MCF 10A (cell line): ENCODE measurements at regions of chr6 and their contacts with region 1.

Region 1: DNA sequence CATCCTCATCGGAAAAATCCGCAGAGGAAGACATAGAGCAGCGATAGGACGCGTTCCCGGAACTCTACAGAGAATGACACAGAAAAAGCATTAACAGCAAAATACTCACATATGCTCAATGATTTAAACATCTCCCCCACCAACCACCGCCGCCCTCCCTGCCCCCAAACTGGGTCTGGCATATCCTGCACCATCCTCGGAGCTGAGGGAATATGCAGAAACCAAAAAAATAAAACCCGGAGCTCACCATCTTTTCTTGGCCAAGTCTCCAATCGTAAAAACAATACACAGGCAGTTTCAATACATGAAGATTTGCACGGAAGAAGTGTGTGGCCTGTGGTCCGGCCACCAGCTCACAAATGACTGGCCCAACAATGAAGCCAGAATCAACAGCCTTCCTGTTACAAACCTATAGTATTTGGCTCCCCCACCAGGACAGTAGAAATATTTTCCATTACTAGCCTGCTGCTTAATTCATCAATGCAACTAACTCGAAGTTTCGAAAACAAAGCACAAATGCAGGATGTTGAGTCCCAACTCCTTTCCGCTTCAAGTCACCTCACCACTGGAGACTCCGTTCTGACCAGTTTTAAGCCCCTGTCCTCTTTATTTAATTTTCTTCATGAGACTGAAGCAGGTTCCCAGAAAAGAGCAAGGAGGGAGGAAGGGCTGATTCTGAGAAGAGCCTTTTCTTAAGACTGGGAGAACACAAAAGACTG is 103.2 kb upstream of the BEND6 start:
- DNase-seq: peak; percentile 86
- H3K4me3 Mint-ChIP-seq: peak overlapping the region; percentile 81
- H3K27ac Mint-ChIP-seq: peak overlapping the region; percentile 56
- H3K4me1 Mint-ChIP-seq: peaks cover 35% of the 10 kb centered on the region
- H3K27me3 Mint-ChIP-seq: no peaks in the 10 kb centered on the region
- CTCF ChIP-seq: peak; percentile 57

Region 2: GRCh38 chr6:56749632-56750151 is 102.0 kb before region 1 on chr6:
- CTCF ChIA-PET with region 1: interaction called, 12 read pairs
- POLR2A ChIA-PET with region 1: interaction called, 8 read pairs
- intact Hi-C with region 1: no loop called
- DNase-seq: peak; percentile 88
- H3K4me3 Mint-ChIP-seq: peak overlapping the region; percentile 65
- H3K27ac Mint-ChIP-seq: peak overlapping the region; percentile 91
- H3K4me1 Mint-ChIP-seq: peaks cover 51% of the 10 kb centered on the region
- H3K27me3 Mint-ChIP-seq: no peaks in the 10 kb centered on the region
- CTCF ChIP-seq: no peak

Region 3: DNA sequence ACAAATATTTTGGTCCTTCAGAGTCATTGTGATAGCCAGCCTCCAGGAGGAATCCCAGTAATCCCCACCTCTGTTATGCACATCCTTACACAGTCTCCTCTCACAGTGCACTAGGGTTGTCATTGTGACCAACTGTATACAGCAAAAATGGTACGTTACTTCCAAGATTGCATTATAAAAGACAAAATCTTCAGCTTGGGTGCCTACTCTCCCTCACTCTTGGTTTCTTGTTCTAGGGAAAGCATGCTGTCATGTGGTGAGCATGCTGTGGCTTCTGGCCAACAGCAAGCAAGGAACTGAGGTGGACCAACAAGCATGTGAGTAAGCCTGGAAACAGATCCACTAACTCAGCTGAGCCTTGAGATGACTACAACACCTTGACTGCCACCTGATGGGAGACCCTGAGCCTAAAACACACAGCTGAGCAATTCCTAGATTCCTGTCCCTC is 78.9 kb before region 1 on chr6:
- CTCF ChIA-PET with region 1: interaction called, 208 read pairs
- POLR2A ChIA-PET with region 1: interaction called, 6 read pairs
- intact Hi-C with region 1: loop called (anchors 1 kb)
- DNase-seq: peak; percentile 79
- H3K4me3 Mint-ChIP-seq: no peak overlapping the region
- H3K27ac Mint-ChIP-seq: peak overlapping the region; percentile 32
- H3K4me1 Mint-ChIP-seq: peaks cover 8% of the 10 kb centered on the region
- H3K27me3 Mint-ChIP-seq: no peaks in the 10 kb centered on the region
- CTCF ChIP-seq: no peak

Region 4: DNA sequence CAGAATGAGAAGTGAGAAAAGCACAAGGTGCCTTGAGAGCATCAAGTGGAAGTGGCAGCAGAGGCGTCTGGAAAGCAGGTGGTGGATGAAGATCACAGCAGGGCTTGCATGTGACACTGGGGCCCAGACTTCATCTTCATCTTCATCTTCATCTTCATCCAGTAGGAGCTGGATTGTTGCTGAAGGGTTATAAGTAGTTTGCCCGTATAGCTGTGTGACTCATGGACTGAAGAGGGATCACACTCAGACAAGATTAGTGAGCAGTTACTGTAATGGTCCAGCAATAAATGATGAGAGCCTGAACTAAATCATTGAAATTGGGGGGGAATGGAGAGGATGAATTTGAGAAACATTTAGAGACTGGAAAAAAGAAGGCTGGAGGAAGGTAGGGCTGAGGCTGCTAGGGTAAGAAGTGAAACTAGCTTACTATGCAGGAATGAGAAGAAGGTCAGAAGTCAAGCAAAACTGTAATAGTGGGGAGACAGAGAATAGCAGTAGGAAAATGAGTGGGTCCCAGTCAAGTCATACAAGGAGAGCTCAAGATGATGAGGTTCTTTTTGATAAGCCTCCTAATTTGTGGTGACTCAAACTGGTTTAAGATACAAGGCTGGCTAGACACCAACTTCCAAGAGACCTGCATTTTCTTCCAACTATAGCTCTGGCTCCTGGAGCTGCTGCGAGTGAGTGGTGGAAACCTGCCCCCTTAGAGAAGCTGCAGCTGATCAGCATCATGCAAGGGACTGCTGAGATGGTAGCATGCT is 10.9 kb after region 1 on chr6:
- CTCF ChIA-PET with region 1: interaction called, 84 read pairs
- POLR2A ChIA-PET with region 1: interaction called, 4 read pairs
- intact Hi-C with region 1: no loop called
- DNase-seq: no peak
- H3K4me3 Mint-ChIP-seq: peak overlapping the region; percentile 3
- H3K27ac Mint-ChIP-seq: peak overlapping the region; percentile 77
- H3K4me1 Mint-ChIP-seq: peaks cover 36% of the 10 kb centered on the region
- H3K27me3 Mint-ChIP-seq: no peaks in the 10 kb centered on the region
- CTCF ChIP-seq: no peak

Region 5: GRCh38 chr6:57040009-57040408 is 188.3 kb after region 1 on chr6:
- CTCF ChIA-PET with region 1: no interaction called
- POLR2A ChIA-PET with region 1: no interaction called
- intact Hi-C with region 1: no loop called
- DNase-seq: peak; percentile 20
- H3K4me3 Mint-ChIP-seq: no peak overlapping the region
- H3K27ac Mint-ChIP-seq: no peak overlapping the region
- H3K4me1 Mint-ChIP-seq: peaks cover 5% of the 10 kb centered on the region
- H3K27me3 Mint-ChIP-seq: peaks cover 23% of the 10 kb centered on the region
- CTCF ChIP-seq: no peak